ENCODE measurements at regions of chr11 and their contacts with region 1.

Region 1: GRCh38 chr11:128868841-128869580 is 1.9 kb upstream of the KCNJ1 start:
- DNase-seq: peak; percentile 59
- ATAC-seq: peak; percentile 55
- H3K4me3 Mint-ChIP-seq: no peak overlapping the region
- H3K27ac Mint-ChIP-seq: no peak overlapping the region
- H3K4me1 Mint-ChIP-seq: no peaks in the 10 kb centered on the region
- H3K27me3 Mint-ChIP-seq: peaks cover 6% of the 10 kb centered on the region

Region 2: GRCh38 chr11:128848815-128849455 is 20.1 kb before region 1 on chr11:
- CTCF ChIA-PET with region 1: no interaction called
- DNase-seq: peak; percentile 77
- ATAC-seq: peak; percentile 81
- H3K4me3 Mint-ChIP-seq: no peak overlapping the region
- H3K27ac Mint-ChIP-seq: no peak overlapping the region
- H3K4me1 Mint-ChIP-seq: peaks cover 25% of the 10 kb centered on the region
- H3K27me3 Mint-ChIP-seq: no peaks in the 10 kb centered on the region

Region 3: DNA sequence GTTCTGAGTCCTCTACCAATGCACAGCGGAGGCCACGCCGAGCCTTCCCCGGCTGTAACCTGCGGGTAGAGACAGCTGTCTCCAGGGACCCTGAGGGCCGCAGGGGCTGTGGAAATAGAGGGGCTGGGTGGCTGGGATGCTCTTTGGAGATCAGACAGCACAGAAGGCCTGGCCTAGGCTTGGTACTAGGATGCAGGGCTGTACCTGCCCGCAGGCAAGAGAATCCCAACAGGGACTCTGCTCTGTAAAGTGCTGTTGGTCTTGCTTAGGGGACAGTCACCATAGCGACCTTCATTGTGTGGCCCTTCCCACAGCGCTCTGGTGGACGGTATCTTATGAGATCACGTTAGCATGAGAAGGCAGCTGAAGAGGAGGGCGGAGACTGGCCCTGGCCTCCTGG is 10.8 kb after region 1 on chr11:
- CTCF ChIA-PET with region 1: interaction called, 25 read pairs
- DNase-seq: no peak
- ATAC-seq: no peak
- H3K4me3 Mint-ChIP-seq: no peak overlapping the region
- H3K27ac Mint-ChIP-seq: no peak overlapping the region
- H3K4me1 Mint-ChIP-seq: no peaks in the 10 kb centered on the region
- H3K27me3 Mint-ChIP-seq: peaks cover 49% of the 10 kb centered on the region

Measured in activated CD8-positive, alpha-beta memory T cell treated with anti-CD3 and anti-CD28 coated beads, Interleukin-2, amount 10 ng/mL, durations not matched to agents 7 days and 5 days (primary cell).